ENCODE measurements at regions of chr6 and their contacts with region 1.

Region 1: GRCh38 chr6:33344701-33345697 is 27.5 kb upstream of the ZBTB22 start:
- DNase-seq: peak; percentile 28 to 87 (median 82)
- ATAC-seq: peak; percentile 60
- H3K4me3 ChIP-seq: peak overlapping the region; percentile 64
- H3K4me3 Mint-ChIP-seq: peak overlapping the region; percentile 68 to 89 (median 86)
- H3K27ac ChIP-seq: peak overlapping the region; percentile 60
- H3K27ac Mint-ChIP-seq: peak overlapping the region; percentile 88 to 99 (median 96)
- H3K4me1 ChIP-seq: peaks cover 23 to 33% of the 10 kb centered on the region in 2 donors
- H3K4me1 Mint-ChIP-seq: peaks cover 22 to 54% (median 41%) of the 10 kb centered on the region in 7 donors
- H3K27me3 ChIP-seq: no peaks in the 10 kb centered on the region
- H3K27me3 Mint-ChIP-seq: peaks cover 0 to 7% (median 0%) of the 10 kb centered on the region in 5 donors

Region 2: GRCh38 chr6:32852844-32853540 is 492.0 kb before region 1 on chr6:
- CTCF ChIA-PET with region 1: no interaction called
- POLR2A ChIA-PET with region 1: no interaction called
- intact Hi-C with region 1: no loop called
- DNase-seq: peak in 5 of 9 donors; percentile 37 to 79 (median 52)
- ATAC-seq: peak; percentile 42
- H3K4me3 ChIP-seq: peak overlapping the region; percentile 91
- H3K4me3 Mint-ChIP-seq: peak overlapping the region; percentile 96 to 100 (median 100)
- H3K27ac ChIP-seq: peak overlapping the region; percentile 100
- H3K27ac Mint-ChIP-seq: peak overlapping the region; percentile 94 to 100 (median 100)
- H3K4me1 ChIP-seq: peaks cover 53 to 65% of the 10 kb centered on the region in 2 donors
- H3K4me1 Mint-ChIP-seq: peaks cover 62 to 81% (median 73%) of the 10 kb centered on the region in 7 donors
- H3K27me3 ChIP-seq: no peaks in the 10 kb centered on the region
- H3K27me3 Mint-ChIP-seq: no peaks in the 10 kb centered on the region

Region 3: DNA sequence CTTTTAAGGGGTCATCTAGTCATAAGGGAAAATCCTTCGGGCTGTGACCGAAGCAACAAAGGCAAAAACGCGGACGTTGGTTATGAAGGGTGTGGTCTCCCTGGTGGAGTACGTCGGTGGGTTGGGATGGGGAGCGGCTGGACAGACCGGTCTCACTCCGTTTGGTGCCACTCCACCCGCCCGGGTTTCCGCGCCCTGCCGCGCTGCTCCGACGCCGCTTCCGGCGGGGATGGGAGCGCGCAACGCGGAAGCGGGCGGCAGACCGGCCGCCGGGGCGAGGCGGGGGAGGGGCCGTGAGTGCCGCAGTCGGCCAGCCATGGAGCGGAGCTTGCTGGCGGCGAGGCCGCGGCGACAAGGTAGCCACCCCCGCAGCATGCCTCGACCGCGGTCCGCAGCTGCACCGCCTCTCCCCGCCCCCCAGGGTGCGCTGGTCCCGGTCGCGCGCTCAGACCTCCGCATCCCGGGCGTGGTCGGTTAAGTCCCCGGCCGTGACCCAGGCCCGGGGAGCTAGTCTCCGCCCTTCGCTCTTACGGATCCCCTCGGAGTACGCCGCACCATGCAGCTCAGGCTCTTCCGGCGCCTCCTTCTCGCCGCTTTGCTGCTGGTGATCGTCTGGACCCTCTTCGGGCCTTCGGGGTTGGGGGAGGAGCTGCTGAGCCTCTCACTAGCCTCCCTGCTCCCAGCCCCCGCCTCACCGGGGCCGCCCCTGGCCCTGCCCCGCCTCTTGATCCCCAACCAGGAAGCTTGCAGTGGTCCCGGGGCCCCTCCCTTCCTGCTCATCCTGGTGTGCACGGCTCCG is 67.9 kb before region 1 on chr6 and contains the start of gene B3GALT4:
- CTCF ChIA-PET with region 1: interaction called, 3 read pairs
- POLR2A ChIA-PET with region 1: interaction called, 37 read pairs
- intact Hi-C with region 1: loop called in 1 of 2 experiments (anchors 1 kb)
- DNase-seq: peak; percentile 55 to 88 (median 63)
- ATAC-seq: peak; percentile 81
- H3K4me3 ChIP-seq: peak within 1 kb of the TSS; percentile 67
- H3K4me3 Mint-ChIP-seq: peak within 1 kb of the TSS; percentile 84 to 99 (median 92)
- H3K27ac ChIP-seq: peak within 1 kb of the TSS; percentile 87
- H3K27ac Mint-ChIP-seq: peak within 1 kb of the TSS; percentile 88 to 98 (median 93)
- H3K4me1 ChIP-seq: peaks cover 47 to 50% of the 10 kb centered on the region in 2 donors
- H3K4me1 Mint-ChIP-seq: peaks cover 38 to 83% (median 65%) of the 10 kb centered on the region in 7 donors
- H3K27me3 ChIP-seq: no peaks in the 10 kb centered on the region
- H3K27me3 Mint-ChIP-seq: no peaks in the 10 kb centered on the region
- total RNA-seq, gene B3GALT4: 12.9 to 48.0 (median 18.2) TPM

Region 4: DNA sequence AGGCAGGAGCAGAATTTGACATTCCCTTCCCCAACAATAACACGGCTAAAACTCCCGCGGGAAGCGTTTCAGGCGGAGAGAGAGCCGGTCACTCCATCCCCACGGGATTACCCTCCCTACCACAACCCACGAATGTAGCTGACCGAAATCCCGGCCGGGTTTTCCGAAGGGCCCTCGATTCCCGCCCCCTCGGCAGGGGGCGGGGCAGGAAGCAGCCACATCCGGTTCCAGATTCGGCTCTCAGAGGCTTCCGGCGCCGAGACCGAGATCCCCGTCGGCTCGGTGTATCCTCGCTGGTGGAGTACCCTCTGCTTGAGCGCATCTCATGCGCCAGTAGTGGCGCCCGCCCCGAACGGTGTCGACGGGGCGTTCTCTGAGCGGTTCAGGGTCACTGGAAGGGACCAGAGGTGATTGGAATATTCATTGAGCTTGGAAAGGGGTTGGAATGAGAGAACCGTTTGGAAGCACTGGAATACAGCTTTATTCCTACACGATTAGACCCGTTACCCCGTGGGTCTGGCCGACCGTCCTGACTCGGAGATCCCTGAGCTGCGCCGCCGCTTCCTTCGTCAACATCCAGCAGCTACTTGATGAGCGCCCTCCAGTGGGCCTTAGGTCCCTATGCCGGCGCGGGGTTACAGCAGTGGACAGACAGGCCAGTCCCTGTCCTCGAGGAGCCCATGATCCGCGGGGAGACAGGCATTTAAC is 45.6 kb before region 1 on chr6:
- CTCF ChIA-PET with region 1: interaction called, 20 read pairs
- POLR2A ChIA-PET with region 1: interaction called, 70 read pairs
- intact Hi-C with region 1: loop called (anchors 1 kb)
- DNase-seq: peak; percentile 89 to 96 (median 93)
- ATAC-seq: peak; percentile 88
- H3K4me3 ChIP-seq: peak overlapping the region; percentile 78
- H3K4me3 Mint-ChIP-seq: peak overlapping the region; percentile 95 to 100 (median 99)
- H3K27ac ChIP-seq: peak overlapping the region; percentile 92
- H3K27ac Mint-ChIP-seq: peak overlapping the region; percentile 95 to 100 (median 99)
- H3K4me1 ChIP-seq: peaks cover 5 to 10% of the 10 kb centered on the region in 2 donors
- H3K4me1 Mint-ChIP-seq: peaks cover 25 to 48% (median 38%) of the 10 kb centered on the region in 7 donors
- H3K27me3 ChIP-seq: no peaks in the 10 kb centered on the region
- H3K27me3 Mint-ChIP-seq: peaks cover 0 to 3% (median 0%) of the 10 kb centered on the region in 5 donors

Region 5: DNA sequence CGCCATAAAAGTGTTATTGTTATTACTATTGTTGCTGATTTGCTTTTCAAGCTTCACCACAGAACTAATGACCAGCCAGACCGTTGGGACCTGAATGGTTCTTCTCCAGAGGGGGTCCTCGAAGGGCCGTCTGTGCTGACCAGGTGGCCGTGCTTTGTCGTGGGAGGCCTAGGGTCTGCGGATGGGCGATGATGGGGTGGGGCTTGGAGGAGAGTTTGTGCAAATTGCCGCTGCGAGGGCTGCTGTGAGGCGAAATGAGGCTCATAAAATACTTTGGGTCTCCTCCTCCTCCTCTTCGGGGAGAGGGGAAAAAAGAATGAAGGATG is 21.4 kb before region 1 on chr6:
- CTCF ChIA-PET with region 1: interaction called, 8 read pairs
- POLR2A ChIA-PET with region 1: interaction called, 8 read pairs
- intact Hi-C with region 1: loop called (anchors 1 kb)
- DNase-seq: peak in 1 of 9 donors; percentile 26
- ATAC-seq: no peak
- H3K4me3 ChIP-seq: peak overlapping the region; percentile 64
- H3K4me3 Mint-ChIP-seq: peak overlapping the region; percentile 81 to 100 (median 98)
- H3K27ac ChIP-seq: peak overlapping the region; percentile 84
- H3K27ac Mint-ChIP-seq: peak overlapping the region; percentile 89 to 99 (median 97)
- H3K4me1 ChIP-seq: peaks cover 41% of the 10 kb centered on the region in 2 donors
- H3K4me1 Mint-ChIP-seq: peaks cover 34 to 59% (median 53%) of the 10 kb centered on the region in 7 donors
- H3K27me3 ChIP-seq: no peaks in the 10 kb centered on the region
- H3K27me3 Mint-ChIP-seq: peaks cover 0 to 4% (median 0%) of the 10 kb centered on the region in 5 donors

Region 6: GRCh38 chr6:33417903-33418689 is 73.1 kb after region 1 on chr6 and contains the start of gene CUTA:
- CTCF ChIA-PET with region 1: interaction called, 5 read pairs
- POLR2A ChIA-PET with region 1: interaction called, 14 read pairs
- intact Hi-C with region 1: loop called in 1 of 2 experiments (anchors 2 kb)
- DNase-seq: peak; percentile 91 to 100 (median 99)
- ATAC-seq: peak; percentile 92
- H3K4me3 ChIP-seq: peak within 1 kb of the TSS; percentile 74
- H3K4me3 Mint-ChIP-seq: peak within 1 kb of the TSS; percentile 88 to 97 (median 94)
- H3K27ac ChIP-seq: peak within 1 kb of the TSS; percentile 94
- H3K27ac Mint-ChIP-seq: peak within 1 kb of the TSS; percentile 98 to 100 (median 99)
- H3K4me1 ChIP-seq: peaks cover 31 to 54% of the 10 kb centered on the region in 2 donors
- H3K4me1 Mint-ChIP-seq: peaks cover 60 to 89% (median 73%) of the 10 kb centered on the region in 7 donors
- H3K27me3 ChIP-seq: no peaks in the 10 kb centered on the region
- H3K27me3 Mint-ChIP-seq: no peaks in the 10 kb centered on the region
- total RNA-seq, gene CUTA: 148 to 235 (median 158) TPM

Region 7: GRCh38 chr6:33447674-33448073 is 102.7 kb after region 1 on chr6:
- CTCF ChIA-PET with region 1: no interaction called
- POLR2A ChIA-PET with region 1: no interaction called
- intact Hi-C with region 1: no loop called
- DNase-seq: no peak
- ATAC-seq: no peak
- H3K4me3 ChIP-seq: no peak overlapping the region
- H3K4me3 Mint-ChIP-seq: no peak overlapping the region
- H3K27ac ChIP-seq: no peak overlapping the region
- H3K27ac Mint-ChIP-seq: peak overlapping the region in 8 of 9 donors; percentile 6 to 84 (median 72)
- H3K4me1 ChIP-seq: peaks cover 0 to 1% of the 10 kb centered on the region in 2 donors
- H3K4me1 Mint-ChIP-seq: peaks cover 6 to 35% (median 26%) of the 10 kb centered on the region in 7 donors
- H3K27me3 ChIP-seq: no peaks in the 10 kb centered on the region
- H3K27me3 Mint-ChIP-seq: no peaks in the 10 kb centered on the region

Region 8: GRCh38 chr6:33481189-33481588 is 136.2 kb after region 1 on chr6:
- CTCF ChIA-PET with region 1: no interaction called
- POLR2A ChIA-PET with region 1: no interaction called
- intact Hi-C with region 1: no loop called
- DNase-seq: peak in 5 of 9 donors; percentile 2 to 19 (median 9)
- ATAC-seq: no peak
- H3K4me3 ChIP-seq: no peak overlapping the region
- H3K4me3 Mint-ChIP-seq: no peak overlapping the region
- H3K27ac ChIP-seq: no peak overlapping the region
- H3K27ac Mint-ChIP-seq: no peak overlapping the region
- H3K4me1 ChIP-seq: no peaks in the 10 kb centered on the region
- H3K4me1 Mint-ChIP-seq: no peaks in the 10 kb centered on the region
- H3K27me3 ChIP-seq: no peaks in the 10 kb centered on the region
- H3K27me3 Mint-ChIP-seq: peaks cover 0 to 17% (median 0%) of the 10 kb centered on the region in 5 donors

Measured in naive thymus-derived CD4-positive, alpha-beta T cell (primary cell).